T-cell (primary cell): ENCODE measurements at regions of chr3 and their contacts with region 1.

Region 1: DNA sequence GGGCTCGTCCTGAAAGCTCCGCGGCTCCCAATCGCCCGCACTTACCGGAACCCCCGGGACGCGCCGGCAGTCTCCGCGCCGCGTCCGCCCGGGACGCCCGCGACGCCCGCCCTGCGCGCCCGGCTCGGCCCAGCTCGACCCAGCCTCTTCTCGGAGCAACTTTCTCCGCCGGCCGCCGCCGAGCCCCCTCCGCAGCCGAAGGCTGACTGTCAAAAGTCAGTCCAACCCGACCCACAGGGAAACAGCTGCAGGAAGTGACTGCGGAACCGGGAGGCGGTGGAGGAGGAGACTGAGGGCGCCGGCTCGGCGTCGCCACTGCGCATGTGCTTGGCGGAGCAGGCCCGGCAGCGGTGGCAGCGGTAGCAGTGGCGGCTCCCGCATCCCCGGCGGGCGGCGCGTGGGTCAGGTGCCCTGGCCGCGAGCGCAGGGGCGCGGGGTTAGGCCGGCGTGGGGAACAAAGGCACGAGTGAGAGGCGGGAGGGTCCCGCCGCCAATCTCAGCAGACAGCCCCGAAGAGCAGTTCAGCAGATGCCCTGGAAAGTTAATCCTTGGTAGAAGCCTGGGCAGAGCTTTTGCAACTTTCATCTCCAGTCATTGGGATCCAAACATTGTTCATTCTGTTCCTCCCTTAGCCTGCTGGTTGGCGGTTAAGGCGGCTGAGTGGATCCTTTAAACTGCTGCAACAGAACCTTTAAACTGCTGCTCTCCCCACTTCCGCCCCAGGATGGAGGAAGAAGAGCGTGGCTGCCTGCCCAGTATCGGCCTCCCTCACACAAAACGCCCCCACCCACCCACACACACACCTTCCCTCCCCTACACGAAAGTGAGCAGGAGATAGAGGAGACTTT is at the start of gene ZMAT3:
- DNase-seq: peak; percentile 60 to 91 (median 78)
- ATAC-seq: peak; percentile 85 to 90 (median 88)
- H3K4me3 ChIP-seq: peak within 1 kb of the TSS; percentile 73 to 93
- H3K4me3 Mint-ChIP-seq: peak within 1 kb of the TSS; percentile 93 to 96 (median 94)
- H3K27ac ChIP-seq: peak within 1 kb of the TSS; percentile 85
- H3K27ac Mint-ChIP-seq: peak within 1 kb of the TSS; percentile 89 to 94
- H3K4me1 ChIP-seq: peaks cover 15 to 36% of the 10 kb centered on the region in 2 experiments
- H3K4me1 Mint-ChIP-seq: peaks cover 51 to 52% (median 52%) of the 10 kb centered on the region in 3 donors
- H3K27me3 ChIP-seq: no peaks in the 10 kb centered on the region
- H3K27me3 Mint-ChIP-seq: no peaks in the 10 kb centered on the region
- total RNA-seq, gene ZMAT3: 17.6 to 24.2 (median 19.6) TPM

Region 2: DNA sequence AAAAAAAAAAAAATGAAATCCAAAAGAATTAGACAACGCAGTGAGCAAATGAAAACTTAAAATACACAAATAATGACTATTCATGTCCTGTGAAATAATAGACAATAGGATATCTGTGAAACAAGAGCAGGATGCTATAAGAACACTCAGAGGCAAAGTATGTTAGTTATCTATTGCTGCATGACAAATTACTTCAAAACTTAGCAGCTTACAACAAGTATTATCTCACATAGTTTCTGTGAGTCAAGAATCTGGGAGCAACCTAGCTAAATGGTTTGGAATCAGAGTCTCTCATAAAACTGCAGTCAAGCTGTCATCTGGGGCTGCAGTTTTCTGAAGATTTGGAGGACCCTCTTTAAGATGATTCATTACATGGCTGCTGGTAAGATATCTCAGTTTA is 36.3 kb after region 1 on chr3:
- CTCF ChIA-PET with region 1: interaction called, 4 to 10 read pairs
- POLR2A ChIA-PET with region 1: no interaction called
- DNase-seq: no peak
- ATAC-seq: no peak
- H3K4me3 ChIP-seq: no peak overlapping the region
- H3K4me3 Mint-ChIP-seq: no peak overlapping the region
- H3K27ac ChIP-seq: no peak overlapping the region
- H3K27ac Mint-ChIP-seq: no peak overlapping the region
- H3K4me1 ChIP-seq: no peaks in the 10 kb centered on the region
- H3K4me1 Mint-ChIP-seq: peaks cover 0 to 1% (median 0%) of the 10 kb centered on the region in 3 donors
- H3K27me3 ChIP-seq: no peaks in the 10 kb centered on the region
- H3K27me3 Mint-ChIP-seq: peaks cover 0 to 13% of the 10 kb centered on the region in 2 donors

Region 3: DNA sequence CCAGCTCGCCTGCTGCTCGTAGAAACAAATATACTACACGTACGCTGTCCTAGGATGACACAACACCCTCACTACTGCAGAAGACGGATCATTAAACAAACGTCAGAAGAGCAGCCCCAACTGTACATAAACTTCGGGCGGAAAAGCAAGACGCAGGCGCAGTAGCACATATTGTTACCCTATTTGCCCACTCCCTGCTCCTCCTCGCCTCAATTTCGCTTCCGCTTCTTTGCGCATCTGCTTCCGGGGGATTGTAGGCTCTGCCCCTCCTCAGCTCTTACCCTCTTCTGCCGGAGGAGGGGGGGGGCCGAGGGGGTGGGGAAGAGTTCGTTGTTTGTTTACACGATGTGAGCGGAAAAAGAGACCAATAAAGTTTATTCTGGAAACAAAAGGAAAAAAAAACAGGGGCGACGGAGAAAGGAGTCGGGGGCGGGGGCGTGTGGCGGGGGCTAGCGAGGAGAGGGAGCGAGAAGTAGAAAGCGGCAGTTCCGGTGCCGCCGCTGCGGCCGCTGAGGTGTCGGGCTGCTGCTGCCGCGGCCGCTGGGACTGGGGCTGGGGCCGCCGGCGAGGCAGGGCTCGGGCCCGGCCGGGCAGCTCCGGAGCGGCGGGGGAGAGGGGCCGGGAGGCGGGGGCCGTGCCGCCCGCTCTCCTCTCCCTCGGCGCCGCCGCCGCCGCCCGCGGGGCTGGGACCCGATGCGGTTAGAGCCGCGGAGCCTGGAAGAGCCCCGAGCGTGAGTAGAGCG is 76.3 kb after region 1 on chr3 and contains the start of gene PIK3CA:
- CTCF ChIA-PET with region 1: no interaction called
- POLR2A ChIA-PET with region 1: interaction called in 1 of 2 experiments, 11 read pairs
- DNase-seq: peak; percentile 79 to 98 (median 96)
- ATAC-seq: peak; percentile 73 to 81 (median 76)
- H3K4me3 ChIP-seq: peak within 1 kb of the TSS; percentile 81 to 98
- H3K4me3 Mint-ChIP-seq: peak within 1 kb of the TSS in 2 of 3 donors; percentile 95 to 99
- H3K27ac ChIP-seq: peak within 1 kb of the TSS; percentile 85
- H3K27ac Mint-ChIP-seq: peak within 1 kb of the TSS; percentile 96 to 99
- H3K4me1 ChIP-seq: peaks cover 6 to 30% of the 10 kb centered on the region in 2 experiments
- H3K4me1 Mint-ChIP-seq: peaks cover 40 to 42% (median 41%) of the 10 kb centered on the region in 3 donors
- H3K27me3 ChIP-seq: no peaks in the 10 kb centered on the region
- H3K27me3 Mint-ChIP-seq: no peaks in the 10 kb centered on the region
- total RNA-seq, gene PIK3CA: 33.8 to 43.5 (median 34.8) TPM